ENCODE measurements at regions of chr9 and their contacts with region 1.

Region 1: DNA sequence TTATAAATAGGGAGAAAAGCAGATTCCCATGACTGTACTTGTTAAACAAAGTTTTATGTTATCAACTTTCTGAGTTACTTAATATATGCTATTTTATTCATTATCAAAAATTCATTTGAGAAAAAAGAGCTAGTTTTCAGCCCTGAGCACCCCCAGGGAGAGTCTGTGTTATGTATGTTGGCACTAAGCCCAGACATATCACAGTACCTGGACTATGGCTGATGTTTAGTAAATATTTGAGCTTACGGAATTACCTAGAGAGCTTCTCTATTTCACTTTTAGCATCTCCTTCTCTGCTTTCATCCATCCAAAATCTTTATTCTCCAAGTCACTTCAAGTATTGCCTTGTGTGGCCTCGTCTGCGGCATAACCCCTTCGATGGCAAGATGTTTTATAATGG is 225.9 kb upstream of the PCSK5 start:
- DNase-seq: no peak
- ATAC-seq: no peak
- H3K4me3 ChIP-seq: no peak overlapping the region
- H3K27ac ChIP-seq: no peak overlapping the region
- H3K4me1 ChIP-seq: peaks cover 0 to 7% (median 0%) of the 10 kb centered on the region in 12 donors
- H3K27me3 ChIP-seq: no peaks in the 10 kb centered on the region
- CTCF ChIP-seq: no peak
- POLR2A ChIP-seq: no peak

Region 2: GRCh38 chr9:75728391-75728790 is 63.8 kb after region 1 on chr9:
- intact Hi-C with region 1: loop called in 1 of 10 experiments (anchors 5 kb)
- DNase-seq: no peak
- ATAC-seq: no peak
- H3K4me3 ChIP-seq: no peak overlapping the region
- H3K27ac ChIP-seq: no peak overlapping the region
- H3K4me1 ChIP-seq: peaks cover 0 to 25% (median 3%) of the 10 kb centered on the region in 12 donors
- H3K27me3 ChIP-seq: no peaks in the 10 kb centered on the region
- CTCF ChIP-seq: no peak
- POLR2A ChIP-seq: no peak